Panc1 (cell line): ENCODE measurements at regions of chr11 and their contacts with region 1.

Region 1: DNA sequence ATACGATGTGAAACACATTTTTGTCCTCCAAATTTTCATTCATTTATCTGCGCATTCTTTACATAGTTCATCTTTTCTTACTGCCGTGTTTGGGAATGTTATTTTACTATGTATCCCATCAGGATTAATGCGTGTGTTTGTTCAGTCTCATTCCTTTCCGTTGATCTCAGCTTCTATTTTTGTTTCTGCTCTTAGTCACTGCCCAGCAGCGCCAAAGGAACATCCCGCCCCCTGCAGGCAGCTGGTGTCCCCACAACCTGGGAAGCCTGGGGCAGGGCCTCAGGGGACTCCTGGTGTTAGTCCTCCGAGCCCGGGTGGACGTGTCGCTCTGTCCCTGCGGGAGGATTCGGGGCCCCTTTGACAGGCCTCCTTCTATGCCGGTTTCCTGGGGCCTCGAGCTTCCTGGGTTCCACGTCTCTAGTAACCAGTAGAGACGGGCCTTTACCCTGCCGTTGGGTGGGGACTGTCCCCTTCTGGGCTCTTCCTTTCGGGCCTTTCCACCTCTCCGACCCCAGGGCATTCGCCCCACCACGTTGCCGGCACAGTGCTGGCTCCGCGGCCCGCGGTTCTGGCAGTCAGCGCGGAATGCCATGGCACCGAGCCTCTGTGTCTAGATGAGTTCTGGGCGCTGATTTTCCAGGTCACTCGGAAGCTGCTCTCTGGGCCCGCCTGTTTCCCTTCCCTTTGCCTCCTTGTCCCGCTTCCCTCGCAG is 39.8 kb downstream of the WEE1 start:
- DNase-seq: peak; percentile 100
- ATAC-seq: peak; percentile 86
- H3K4me3 ChIP-seq: peak overlapping the region; percentile 50 to 76
- H3K27ac ChIP-seq: peak overlapping the region; percentile 95
- H3K4me1 ChIP-seq: peaks cover 27% of the 10 kb centered on the region
- H3K27me3 ChIP-seq: no peaks in the 10 kb centered on the region
- CTCF ChIP-seq: peak; percentile 99

Region 2: DNA sequence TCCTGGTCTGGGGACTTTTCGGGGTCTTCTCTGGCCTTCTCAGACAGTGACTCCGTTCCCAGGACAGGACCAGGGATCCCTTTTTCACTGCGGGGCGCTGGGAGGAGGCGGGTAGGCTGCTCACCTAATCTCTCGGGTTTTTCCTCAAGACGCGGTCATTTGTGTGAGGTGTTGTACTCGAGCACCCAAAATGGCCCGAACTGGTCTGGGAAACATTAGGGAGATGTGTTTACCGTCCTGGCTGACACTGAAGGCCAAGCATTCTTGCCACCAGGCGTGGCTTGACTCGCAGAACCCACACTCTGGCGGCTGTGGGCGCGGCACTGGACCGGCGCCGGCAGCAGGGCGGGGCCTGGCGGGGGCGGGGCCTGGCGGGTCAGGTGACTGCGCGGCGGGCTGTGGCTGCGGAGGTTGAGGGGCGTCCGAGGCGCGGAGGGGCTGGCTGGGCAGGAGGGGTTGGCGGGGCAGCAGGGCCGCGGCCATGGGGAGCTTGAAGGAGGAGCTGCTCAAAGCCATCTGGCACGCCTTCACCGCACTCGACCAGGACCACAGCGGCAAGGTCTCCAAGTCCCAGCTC is 50.5 kb after region 1 on chr11 and contains the start of gene SWAP70:
- CTCF ChIA-PET with region 1: interaction called, 4 read pairs
- POLR2A ChIA-PET with region 1: no interaction called
- in situ Hi-C with region 1: no loop called
- intact Hi-C with region 1: loop called (anchors 5 kb)
- DNase-seq: peak; percentile 33
- ATAC-seq: peak; percentile 98
- H3K4me3 ChIP-seq: peak within 1 kb of the TSS; percentile 78 to 97
- H3K27ac ChIP-seq: peak within 1 kb of the TSS; percentile 95
- H3K4me1 ChIP-seq: no peaks in the 10 kb centered on the region
- H3K27me3 ChIP-seq: no peaks in the 10 kb centered on the region
- CTCF ChIP-seq: no peak
- total RNA-seq, gene SWAP70: 96.0 TPM

Region 3: GRCh38 chr11:9748361-9748970 is 135.2 kb after region 1 on chr11:
- CTCF ChIA-PET with region 1: interaction called, 3 read pairs
- POLR2A ChIA-PET with region 1: interaction called, 3 read pairs
- in situ Hi-C with region 1: no loop called
- intact Hi-C with region 1: loop called (anchors 2 kb)
- DNase-seq: peak; percentile 77
- ATAC-seq: peak; percentile 92
- H3K4me3 ChIP-seq: no peak overlapping the region
- H3K27ac ChIP-seq: peak overlapping the region; percentile 54; the same call in 1 of the 2 replicates
- H3K4me1 ChIP-seq: peaks cover 29% of the 10 kb centered on the region
- H3K27me3 ChIP-seq: no peaks in the 10 kb centered on the region
- CTCF ChIP-seq: peak; percentile 96

Region 4: DNA sequence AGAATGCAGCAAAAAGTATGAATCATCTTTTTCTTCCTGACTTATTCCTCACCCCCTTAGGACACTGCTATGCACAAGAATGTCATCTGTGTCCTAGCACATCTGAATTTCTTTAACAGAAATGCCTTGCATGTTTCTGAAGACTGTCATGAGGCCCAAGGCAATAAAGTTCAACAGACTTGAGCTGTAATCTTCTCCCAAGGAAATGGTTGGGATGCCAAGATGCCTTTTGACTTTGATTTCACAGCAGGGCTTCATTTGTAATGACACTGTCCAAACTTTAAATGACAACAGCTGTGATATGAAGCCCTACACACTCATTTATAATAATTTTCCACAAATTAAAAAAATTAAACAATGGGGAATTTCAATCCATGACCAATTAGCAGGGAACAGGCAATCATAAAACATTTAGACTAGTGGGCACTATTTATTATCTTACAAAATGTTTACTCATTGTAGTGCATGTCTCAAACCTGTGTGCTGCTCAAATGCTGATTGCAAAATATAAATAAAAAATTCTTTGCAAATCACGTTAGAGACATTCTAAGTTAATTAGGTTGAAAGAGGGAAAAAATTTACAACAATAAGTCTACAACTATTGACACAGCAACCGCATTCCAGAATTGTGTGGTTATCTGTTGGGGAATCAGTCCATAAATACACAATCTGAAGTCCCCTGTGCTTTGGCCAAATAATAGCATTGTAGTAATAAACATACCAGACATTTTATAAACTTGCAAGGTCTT is 292.9 kb after region 1 on chr11:
- CTCF ChIA-PET with region 1: no interaction called
- POLR2A ChIA-PET with region 1: no interaction called
- in situ Hi-C with region 1: no loop called
- intact Hi-C with region 1: loop called (anchors 5 kb)
- DNase-seq: peak; percentile 81
- ATAC-seq: peak; percentile 97
- H3K4me3 ChIP-seq: no peak overlapping the region; a peak in 1 of 4 replicates
- H3K27ac ChIP-seq: peak overlapping the region; percentile 100
- H3K4me1 ChIP-seq: peaks cover 29% of the 10 kb centered on the region
- H3K27me3 ChIP-seq: no peaks in the 10 kb centered on the region
- CTCF ChIP-seq: no peak

Region 5: DNA sequence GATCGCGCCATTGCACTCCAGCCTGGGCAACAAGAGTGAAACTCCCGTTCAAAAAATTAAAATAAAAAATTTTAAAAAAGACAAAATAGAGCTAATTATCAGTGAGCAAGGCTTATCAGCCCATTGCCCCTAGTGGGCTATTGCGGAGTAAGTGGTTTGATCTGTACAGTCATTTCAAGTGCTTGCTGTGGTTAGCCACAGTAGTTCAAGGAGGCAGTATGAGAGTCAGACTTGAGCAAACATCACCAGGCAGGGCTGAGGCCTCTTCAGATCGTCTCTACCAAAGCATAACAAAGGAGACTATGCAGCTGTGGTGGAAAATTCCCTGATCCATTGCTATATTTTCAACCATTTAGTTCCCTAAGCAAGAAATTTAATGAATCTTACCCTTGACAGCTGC is 685.1 kb after region 1 on chr11:
- CTCF ChIA-PET with region 1: no interaction called
- POLR2A ChIA-PET with region 1: no interaction called
- in situ Hi-C with region 1: no loop called
- intact Hi-C with region 1: no loop called
- DNase-seq: no peak
- ATAC-seq: no peak
- H3K4me3 ChIP-seq: no peak overlapping the region
- H3K27ac ChIP-seq: peak overlapping the region; percentile 24; the same call in 1 of the 2 replicates
- H3K4me1 ChIP-seq: peaks cover 40% of the 10 kb centered on the region
- H3K27me3 ChIP-seq: no peaks in the 10 kb centered on the region
- CTCF ChIP-seq: peak; percentile 40

Region 6: GRCh38 chr11:10322830-10323792 is 709.8 kb after region 1 on chr11:
- CTCF ChIA-PET with region 1: no interaction called
- POLR2A ChIA-PET with region 1: no interaction called
- in situ Hi-C with region 1: no loop called
- intact Hi-C with region 1: loop called (anchors 10 kb)
- DNase-seq: peak; percentile 90
- ATAC-seq: peak; percentile 82
- H3K4me3 ChIP-seq: peak overlapping the region in 1 of 2 experiments; percentile 36; a peak in 2 of 4 replicates
- H3K27ac ChIP-seq: peak overlapping the region; percentile 90
- H3K4me1 ChIP-seq: peaks cover 83% of the 10 kb centered on the region
- H3K27me3 ChIP-seq: no peaks in the 10 kb centered on the region
- CTCF ChIP-seq: peak; percentile 83